Heart left ventricle (tissue), 16 donors: ENCODE measurements at regions of chr5 and their contacts with region 1.

Region 1: GRCh38 chr5:36151434-36152323 is at the starts of genes LMBRD2 and SKP2:
- DNase-seq: peak; percentile 98 to 99 (median 98)
- ATAC-seq: peak; percentile 99 to 100 (median 99)
- H3K4me3 ChIP-seq: peak within 1 kb of the TSS; percentile 64 to 98 (median 90)
- H3K27ac ChIP-seq: peak within 1 kb of the TSS; percentile 33 to 93 (median 85)
- H3K4me1 ChIP-seq: peaks cover 0 to 52% (median 29%) of the 10 kb centered on the region in 12 donors
- H3K27me3 ChIP-seq: no peaks in the 10 kb centered on the region
- CTCF ChIP-seq: no peak
- POLR2A ChIP-seq: peak in 1 of 2 donors; percentile 73
- total RNA-seq, gene LMBRD2: 10.0 to 18.2 (median 13.9) TPM
- total RNA-seq, gene SKP2: 3.4 to 12.0 (median 6.0) TPM

Region 2: GRCh38 chr5:36241631-36242533 is 90.2 kb after region 1 on chr5 and contains the start of gene NADK2:
- intact Hi-C with region 1: loop called in 3 of 10 experiments (anchors 2 to 5 kb)
- DNase-seq: peak; percentile 96 to 97 (median 96)
- ATAC-seq: peak; percentile 93 to 96 (median 94)
- H3K4me3 ChIP-seq: peak within 1 kb of the TSS; percentile 46 to 97 (median 90)
- H3K27ac ChIP-seq: peak within 1 kb of the TSS; percentile 86 to 99 (median 96)
- H3K4me1 ChIP-seq: peaks cover 0 to 44% (median 36%) of the 10 kb centered on the region in 12 donors
- H3K27me3 ChIP-seq: no peaks in the 10 kb centered on the region
- CTCF ChIP-seq: peak; percentile 65 to 89 (median 72)
- POLR2A ChIP-seq: peak; percentile 70 to 86
- total RNA-seq, gene NADK2: 25.8 to 41.8 (median 37.2) TPM

Region 3: GRCh38 chr5:37370864-37371726 is 1219.4 kb after region 1 on chr5 and contains the start of gene NUP155:
- intact Hi-C with region 1: loop called in 1 of 10 experiments (anchors 5 kb)
- DNase-seq: peak; percentile 93 to 95 (median 93)
- ATAC-seq: peak; percentile 99
- H3K4me3 ChIP-seq: peak within 1 kb of the TSS; percentile 57 to 94 (median 85)
- H3K27ac ChIP-seq: peak within 1 kb of the TSS; percentile 11 to 92 (median 82)
- H3K4me1 ChIP-seq: peaks cover 10 to 30% (median 24%) of the 10 kb centered on the region in 12 donors
- H3K27me3 ChIP-seq: no peaks in the 10 kb centered on the region
- CTCF ChIP-seq: no peak
- POLR2A ChIP-seq: peak in 1 of 2 donors; percentile 63
- total RNA-seq, gene NUP155: 9.7 to 17.4 (median 12.4) TPM